Naive thymus-derived CD4-positive, alpha-beta T cell (primary cell): ENCODE measurements at regions of chr5 and their contacts with region 1.

Region 1: GRCh38 chr5:1641560-1642166 is 117.9 kb upstream of the LPCAT1 start:
- DNase-seq: peak; percentile 36 to 75 (median 62)
- ATAC-seq: peak; percentile 93
- H3K4me3 ChIP-seq: no peak overlapping the region
- H3K4me3 Mint-ChIP-seq: peak overlapping the region in 3 of 10 donors; percentile 22 to 53 (median 26)
- H3K27ac ChIP-seq: no peak overlapping the region
- H3K27ac Mint-ChIP-seq: peak overlapping the region in 1 of 9 donors; percentile 31
- H3K4me1 ChIP-seq: peaks cover 3 to 12% of the 10 kb centered on the region in 2 donors
- H3K4me1 Mint-ChIP-seq: peaks cover 5 to 24% (median 15%) of the 10 kb centered on the region in 7 donors
- H3K27me3 ChIP-seq: peaks cover 7 to 13% of the 10 kb centered on the region in 2 donors
- H3K27me3 Mint-ChIP-seq: peaks cover 17 to 44% (median 21%) of the 10 kb centered on the region in 5 donors

Region 2: GRCh38 chr5:1167728-1168709 is 473.6 kb before region 1 on chr5:
- CTCF ChIA-PET with region 1: interaction called, 31 read pairs
- POLR2A ChIA-PET with region 1: no interaction called
- intact Hi-C with region 1: loop called (anchors 1 kb)
- DNase-seq: peak; percentile 51 to 79 (median 71)
- ATAC-seq: peak; percentile 81
- H3K4me3 ChIP-seq: no peak overlapping the region
- H3K4me3 Mint-ChIP-seq: peak overlapping the region; percentile 58 to 85 (median 79)
- H3K27ac ChIP-seq: no peak overlapping the region
- H3K27ac Mint-ChIP-seq: no peak overlapping the region
- H3K4me1 ChIP-seq: no peaks in the 10 kb centered on the region
- H3K4me1 Mint-ChIP-seq: peaks cover 6 to 18% (median 12%) of the 10 kb centered on the region in 7 donors
- H3K27me3 ChIP-seq: no peaks in the 10 kb centered on the region
- H3K27me3 Mint-ChIP-seq: peaks cover 2 to 22% (median 11%) of the 10 kb centered on the region in 5 donors

Region 3: GRCh38 chr5:1315709-1316587 is 325.7 kb before region 1 on chr5:
- CTCF ChIA-PET with region 1: interaction called, 3 read pairs
- POLR2A ChIA-PET with region 1: no interaction called
- intact Hi-C with region 1: loop called in 1 of 2 experiments (anchors 5 kb)
- DNase-seq: peak in 8 of 9 donors; percentile 47 to 88 (median 82)
- ATAC-seq: peak; percentile 79
- H3K4me3 ChIP-seq: peak overlapping the region; percentile 51
- H3K4me3 Mint-ChIP-seq: peak overlapping the region; percentile 81 to 92 (median 86)
- H3K27ac ChIP-seq: peak overlapping the region; percentile 66
- H3K27ac Mint-ChIP-seq: peak overlapping the region; percentile 94 to 96 (median 95)
- H3K4me1 ChIP-seq: peaks cover 39 to 55% of the 10 kb centered on the region in 2 donors
- H3K4me1 Mint-ChIP-seq: peaks cover 36 to 70% (median 59%) of the 10 kb centered on the region in 7 donors
- H3K27me3 ChIP-seq: no peaks in the 10 kb centered on the region
- H3K27me3 Mint-ChIP-seq: peaks cover 0 to 2% (median 0%) of the 10 kb centered on the region in 5 donors

Region 4: GRCh38 chr5:1380011-1380817 is 261.4 kb before region 1 on chr5:
- CTCF ChIA-PET with region 1: interaction called, 4 read pairs
- POLR2A ChIA-PET with region 1: interaction called, 4 read pairs
- intact Hi-C with region 1: loop called (anchors 1 kb)
- DNase-seq: peak; percentile 46 to 71 (median 63)
- ATAC-seq: peak; percentile 91
- H3K4me3 ChIP-seq: peak overlapping the region; percentile 53
- H3K4me3 Mint-ChIP-seq: peak overlapping the region; percentile 62 to 83 (median 78)
- H3K27ac ChIP-seq: no peak overlapping the region
- H3K27ac Mint-ChIP-seq: peak overlapping the region in 6 of 9 donors; percentile 3 to 89 (median 66)
- H3K4me1 ChIP-seq: peaks cover 9 to 12% of the 10 kb centered on the region in 2 donors
- H3K4me1 Mint-ChIP-seq: peaks cover 5 to 18% (median 9%) of the 10 kb centered on the region in 7 donors
- H3K27me3 ChIP-seq: no peaks in the 10 kb centered on the region
- H3K27me3 Mint-ChIP-seq: peaks cover 0 to 3% (median 0%) of the 10 kb centered on the region in 5 donors

Region 5: DNA sequence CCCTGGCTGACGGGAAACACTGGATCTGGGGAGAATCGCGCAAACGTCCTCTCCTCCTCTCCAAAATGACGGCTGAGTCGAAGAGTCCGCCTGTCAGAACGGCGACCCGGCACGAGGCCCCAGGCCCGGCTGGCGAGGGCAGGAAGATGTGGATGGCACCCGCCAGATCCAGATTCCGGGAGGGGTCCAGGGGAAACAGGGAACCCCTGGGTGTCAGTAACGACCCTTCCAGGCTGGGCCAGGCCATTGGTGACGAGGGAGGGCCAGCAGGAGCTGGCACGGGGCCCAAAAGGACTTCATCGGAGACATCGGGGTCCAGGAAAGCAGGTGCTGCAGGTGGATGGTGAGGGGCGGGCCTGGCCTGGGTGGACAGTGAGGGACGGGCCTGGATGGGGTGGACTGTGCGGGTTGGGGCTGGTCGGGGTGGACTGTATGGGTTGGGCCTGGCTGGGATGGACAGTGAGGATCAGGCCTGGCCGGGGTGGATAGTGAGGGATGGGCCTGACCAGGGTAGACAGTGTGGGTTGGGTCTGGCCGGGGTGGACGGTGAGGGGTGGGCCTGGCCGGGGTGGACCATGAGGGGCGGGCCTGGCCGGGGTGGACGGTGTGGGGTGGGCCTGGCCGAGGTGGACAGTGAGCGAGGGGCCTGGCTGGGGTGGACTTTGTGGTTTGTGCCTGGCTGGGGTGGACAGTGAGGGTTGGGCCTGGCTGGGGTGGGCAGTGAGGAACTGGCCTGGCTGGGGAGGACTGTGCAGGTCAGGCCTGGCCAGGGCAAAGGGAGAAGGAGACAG is 210.4 kb before region 1 on chr5:
- CTCF ChIA-PET with region 1: no interaction called
- POLR2A ChIA-PET with region 1: no interaction called
- intact Hi-C with region 1: no loop called
- DNase-seq: peak in 1 of 9 donors; percentile 3
- ATAC-seq: no peak
- H3K4me3 ChIP-seq: no peak overlapping the region
- H3K4me3 Mint-ChIP-seq: no peak overlapping the region
- H3K27ac ChIP-seq: no peak overlapping the region
- H3K27ac Mint-ChIP-seq: no peak overlapping the region
- H3K4me1 ChIP-seq: no peaks in the 10 kb centered on the region
- H3K4me1 Mint-ChIP-seq: no peaks in the 10 kb centered on the region
- H3K27me3 ChIP-seq: no peaks in the 10 kb centered on the region
- H3K27me3 Mint-ChIP-seq: peaks cover 0 to 10% (median 8%) of the 10 kb centered on the region in 5 donors

Region 6: GRCh38 chr5:1511651-1512540 is 129.8 kb before region 1 on chr5:
- CTCF ChIA-PET with region 1: no interaction called
- POLR2A ChIA-PET with region 1: no interaction called
- intact Hi-C with region 1: loop called in 1 of 2 experiments (anchors 1 kb)
- DNase-seq: peak in 2 of 9 donors; percentile 7 to 11
- ATAC-seq: no peak
- H3K4me3 ChIP-seq: no peak overlapping the region
- H3K4me3 Mint-ChIP-seq: no peak overlapping the region
- H3K27ac ChIP-seq: no peak overlapping the region
- H3K27ac Mint-ChIP-seq: no peak overlapping the region
- H3K4me1 ChIP-seq: peaks cover 0 to 31% of the 10 kb centered on the region in 2 donors
- H3K4me1 Mint-ChIP-seq: peaks cover 0 to 33% (median 22%) of the 10 kb centered on the region in 7 donors
- H3K27me3 ChIP-seq: no peaks in the 10 kb centered on the region
- H3K27me3 Mint-ChIP-seq: no peaks in the 10 kb centered on the region

Region 7: GRCh38 chr5:1594357-1595106 is 47.1 kb before region 1 on chr5:
- CTCF ChIA-PET with region 1: interaction called, 3 read pairs
- POLR2A ChIA-PET with region 1: no interaction called
- intact Hi-C with region 1: loop called in 1 of 2 experiments (anchors 1 kb)
- DNase-seq: peak; percentile 10 to 75 (median 64)
- ATAC-seq: peak; percentile 91
- H3K4me3 ChIP-seq: peak overlapping the region; percentile 71
- H3K4me3 Mint-ChIP-seq: peak overlapping the region; percentile 53 to 86 (median 78)
- H3K27ac ChIP-seq: peak overlapping the region; percentile 58
- H3K27ac Mint-ChIP-seq: peak overlapping the region in 3 of 9 donors; percentile 54 to 81 (median 77)
- H3K4me1 ChIP-seq: no peaks in the 10 kb centered on the region
- H3K4me1 Mint-ChIP-seq: peaks cover 0 to 16% (median 8%) of the 10 kb centered on the region in 7 donors
- H3K27me3 ChIP-seq: no peaks in the 10 kb centered on the region
- H3K27me3 Mint-ChIP-seq: peaks cover 0 to 3% (median 0%) of the 10 kb centered on the region in 5 donors